Activated CD4-positive, alpha-beta memory T cell treated with anti-CD3 and anti-CD28 coated beads, Interleukin-2, amount 10 ng/mL, durations not matched to agents 7 days and 5 days (primary cell): ENCODE measurements at regions of chr17 and their contacts with region 1.

Region 1: DNA sequence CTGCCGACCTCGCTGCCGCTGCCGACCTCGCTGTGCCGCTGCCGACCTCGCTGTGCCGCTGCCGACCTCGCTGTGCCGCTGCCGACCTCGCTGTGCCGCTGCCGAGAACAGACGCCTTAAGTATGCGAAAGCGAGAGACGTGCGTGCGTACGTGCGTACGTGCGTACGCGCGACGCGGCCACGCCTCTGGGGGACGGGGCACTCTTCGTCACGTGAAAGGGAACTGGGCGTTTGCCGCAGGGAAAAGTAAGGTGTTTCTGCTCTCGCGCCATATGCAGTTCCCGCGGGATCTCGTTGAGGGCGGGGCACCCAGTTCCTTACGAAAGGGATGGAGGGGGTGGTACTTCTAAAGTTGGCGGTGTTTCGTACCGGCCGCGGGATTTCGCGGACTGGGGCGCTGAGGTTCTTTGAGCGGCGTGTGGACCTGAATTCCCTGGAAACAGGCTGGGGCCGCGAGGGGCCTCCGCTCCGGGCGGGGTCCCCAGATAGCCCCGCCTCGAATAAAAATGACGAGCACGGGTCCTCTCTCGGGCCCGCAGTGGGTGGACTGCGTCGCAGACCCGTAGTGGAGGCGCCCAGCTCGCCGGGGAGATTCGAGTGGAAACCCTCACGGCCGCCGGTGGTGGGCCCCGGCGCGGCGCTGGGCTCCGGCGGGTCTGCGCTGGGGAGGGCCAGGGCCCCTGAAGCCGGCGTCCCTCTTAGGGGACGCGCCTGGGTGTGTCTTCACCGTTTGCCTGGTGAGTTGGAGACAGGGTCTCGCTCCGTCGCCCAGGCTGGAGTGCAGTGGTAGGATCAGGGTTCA is at the start of gene EIF4A3:
- DNase-seq: peak; percentile 99
- H3K4me3 Mint-ChIP-seq: peak within 1 kb of the TSS; percentile 87
- H3K27ac Mint-ChIP-seq: peak within 1 kb of the TSS; percentile 84
- H3K4me1 Mint-ChIP-seq: peaks cover 55% of the 10 kb centered on the region
- H3K27me3 Mint-ChIP-seq: no peaks in the 10 kb centered on the region
- total RNA-seq, gene EIF4A3: 109 to 115 TPM

Region 2: GRCh38 chr17:80129003-80129565 is 18.2 kb before region 1 on chr17:
- CTCF ChIA-PET with region 1: no interaction called
- POLR2A ChIA-PET with region 1: interaction called, 36 read pairs
- DNase-seq: no peak
- H3K4me3 Mint-ChIP-seq: no peak overlapping the region
- H3K27ac Mint-ChIP-seq: no peak overlapping the region
- H3K4me1 Mint-ChIP-seq: no peaks in the 10 kb centered on the region
- H3K27me3 Mint-ChIP-seq: peaks cover 17% of the 10 kb centered on the region

Region 3: GRCh38 chr17:80219013-80219762 is 72.0 kb after region 1 on chr17:
- CTCF ChIA-PET with region 1: no interaction called
- POLR2A ChIA-PET with region 1: interaction called, 17 read pairs
- DNase-seq: peak; percentile 95
- H3K4me3 Mint-ChIP-seq: peak overlapping the region; percentile 89
- H3K27ac Mint-ChIP-seq: peak overlapping the region; percentile 89
- H3K4me1 Mint-ChIP-seq: peaks cover 32% of the 10 kb centered on the region
- H3K27me3 Mint-ChIP-seq: peaks cover 1% of the 10 kb centered on the region

Region 4: DNA sequence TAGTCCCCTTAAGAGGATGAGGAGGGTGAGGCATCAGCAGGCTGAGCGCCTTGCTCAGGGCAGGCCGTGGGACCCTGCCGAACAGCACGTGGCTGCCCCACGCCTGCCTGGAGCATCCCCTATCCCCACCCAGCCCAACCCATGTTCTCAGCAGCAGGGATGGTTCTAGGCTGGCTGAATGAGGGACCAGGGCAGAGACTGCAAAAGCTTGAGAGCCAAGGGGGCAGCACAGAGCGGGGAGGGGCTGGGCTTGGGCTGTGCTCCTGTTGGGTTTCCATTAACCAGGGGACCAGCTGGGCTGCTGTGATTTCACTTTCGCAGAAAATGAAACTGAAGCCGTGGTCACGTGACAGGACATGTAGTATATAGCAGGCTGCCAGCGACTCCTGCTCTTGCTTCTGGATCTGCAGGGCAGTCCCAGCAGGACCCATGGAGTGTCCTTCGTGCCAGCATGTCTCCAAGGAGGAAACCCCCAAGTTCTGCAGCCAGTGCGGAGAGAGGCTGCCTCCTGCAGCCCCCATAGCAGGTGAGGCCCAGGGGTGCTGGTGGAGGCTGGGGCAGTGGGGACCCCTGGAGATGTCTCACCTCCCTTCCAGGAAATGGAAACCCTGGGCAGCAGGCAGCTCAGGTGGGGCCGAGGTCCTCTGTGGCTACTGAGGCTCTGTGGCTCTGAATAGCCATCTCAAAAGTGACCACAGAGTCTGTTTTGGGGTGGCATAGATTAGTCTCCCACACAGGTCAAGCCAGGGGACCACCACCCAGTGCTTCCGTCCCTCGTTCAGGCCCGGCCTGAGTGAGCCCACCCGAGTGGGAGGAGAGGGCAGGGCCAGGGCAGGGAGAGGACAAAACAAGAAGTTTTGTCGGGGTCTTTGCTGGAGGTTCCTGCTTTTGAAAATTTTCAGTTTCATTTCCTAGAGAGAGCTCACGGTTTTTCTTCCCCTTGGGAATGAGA is 116.3 kb after region 1 on chr17:
- CTCF ChIA-PET with region 1: no interaction called
- POLR2A ChIA-PET with region 1: interaction called, 60 read pairs
- DNase-seq: peak; percentile 94
- H3K4me3 Mint-ChIP-seq: peak overlapping the region; percentile 99
- H3K27ac Mint-ChIP-seq: peak overlapping the region; percentile 92
- H3K4me1 Mint-ChIP-seq: peaks cover 47% of the 10 kb centered on the region
- H3K27me3 Mint-ChIP-seq: no peaks in the 10 kb centered on the region